ENCODE measurements at regions of chr11 and their contacts with region 1.

Region 1: DNA sequence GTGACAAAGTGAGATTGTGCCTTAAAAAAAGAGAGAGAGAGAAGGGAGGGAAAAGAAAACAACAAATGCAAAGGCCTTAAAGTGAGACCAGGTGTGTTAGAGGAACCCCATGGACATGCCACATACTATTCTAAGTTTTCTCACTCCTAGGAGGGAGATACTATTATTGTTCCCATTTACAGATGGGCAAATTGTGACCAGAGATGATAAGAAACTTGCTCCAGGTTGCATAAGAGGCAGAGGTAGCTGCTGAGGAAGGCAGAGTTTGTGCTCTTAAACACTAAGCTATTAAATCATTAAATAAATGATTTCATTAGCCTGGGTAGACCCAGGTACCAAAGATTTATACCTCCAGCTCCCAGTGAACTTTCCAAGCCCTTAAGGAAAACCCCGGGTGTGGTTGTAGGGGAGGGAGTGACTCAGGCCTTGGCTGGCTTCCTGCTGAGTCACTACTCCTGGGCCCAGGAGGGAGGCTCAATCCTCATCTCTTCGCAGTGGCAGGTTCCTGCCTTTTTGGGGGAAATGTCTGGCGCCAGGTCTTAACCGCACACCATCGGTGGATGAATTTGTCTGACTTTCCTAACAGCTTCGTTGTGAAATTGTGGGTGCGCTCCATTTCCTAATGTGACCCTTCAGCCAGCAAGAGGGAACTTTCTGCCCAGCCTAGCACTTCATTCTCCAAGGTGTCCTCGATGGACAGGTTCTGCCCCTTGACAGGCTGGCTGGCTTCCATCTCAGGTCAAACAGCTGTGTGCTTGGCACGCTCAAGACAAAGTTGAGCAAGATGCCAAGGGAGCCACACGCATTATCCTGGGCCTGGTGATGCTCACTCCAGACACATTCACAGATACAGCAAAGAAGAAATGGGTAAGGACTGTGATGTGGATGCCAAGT is 33.4 kb upstream of the PTPRJ start:
- DNase-seq: peak; percentile 93 to 99
- H3K4me3 ChIP-seq: no peak overlapping the region
- H3K27ac ChIP-seq: peak overlapping the region; percentile 79
- H3K4me1 ChIP-seq: peaks cover 55% of the 10 kb centered on the region
- H3K27me3 ChIP-seq: no peaks in the 10 kb centered on the region
- CTCF ChIP-seq: no peak

Region 2: DNA sequence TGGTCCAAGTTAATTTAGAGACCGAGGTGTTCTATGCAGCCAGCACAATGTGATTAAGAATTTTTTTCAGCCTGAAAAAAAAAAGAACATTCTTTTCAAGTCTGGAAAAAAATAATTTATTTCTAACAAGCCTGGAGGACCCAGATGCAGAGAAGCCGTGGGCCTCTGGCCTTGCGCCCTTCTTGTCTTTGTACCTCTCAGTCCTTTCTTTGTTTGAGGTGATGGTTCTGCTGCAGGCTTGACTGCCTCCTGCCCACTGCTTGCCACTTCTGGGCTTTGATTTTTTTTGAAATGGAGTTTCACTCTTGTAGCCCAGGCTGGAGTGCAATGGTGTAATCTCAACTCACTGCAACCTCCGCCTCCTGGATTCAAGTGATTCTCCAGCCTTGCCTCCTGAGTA is 26.2 kb after region 1 on chr11:
- CTCF ChIA-PET with region 1: no interaction called
- POLR2A ChIA-PET with region 1: interaction called, 3 read pairs
- intact Hi-C with region 1: loop called (anchors 2 kb)
- DNase-seq: no peak
- H3K4me3 ChIP-seq: no peak overlapping the region
- H3K27ac ChIP-seq: peak overlapping the region; percentile 79
- H3K4me1 ChIP-seq: peaks cover 34% of the 10 kb centered on the region
- H3K27me3 ChIP-seq: no peaks in the 10 kb centered on the region
- CTCF ChIP-seq: no peak

Region 3: GRCh38 chr11:48001438-48002021 is 54.6 kb after region 1 on chr11:
- CTCF ChIA-PET with region 1: no interaction called
- POLR2A ChIA-PET with region 1: no interaction called
- intact Hi-C with region 1: no loop called
- DNase-seq: no peak
- H3K4me3 ChIP-seq: no peak overlapping the region
- H3K27ac ChIP-seq: no peak overlapping the region
- H3K4me1 ChIP-seq: peaks cover 27% of the 10 kb centered on the region
- H3K27me3 ChIP-seq: no peaks in the 10 kb centered on the region
- CTCF ChIP-seq: no peak

Region 4: DNA sequence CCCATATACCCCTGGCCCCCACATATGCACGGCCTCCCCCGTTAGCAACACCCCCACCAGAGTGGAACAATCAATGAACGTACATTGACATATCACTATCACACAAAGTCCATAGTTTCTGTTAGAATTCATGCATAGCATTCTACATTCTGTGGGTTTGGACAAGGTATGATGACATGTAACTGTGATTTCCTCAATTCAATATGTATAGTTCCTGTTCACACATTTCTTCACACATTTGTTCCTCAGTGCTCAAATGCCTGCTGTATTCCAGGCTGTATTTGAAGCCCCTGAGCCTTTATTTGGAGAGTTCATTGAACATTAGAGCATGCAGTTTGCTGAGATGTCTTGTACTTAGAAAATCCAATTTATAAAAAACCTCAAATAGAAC is 103.4 kb after region 1 on chr11:
- CTCF ChIA-PET with region 1: interaction called, 7 read pairs
- POLR2A ChIA-PET with region 1: no interaction called
- intact Hi-C with region 1: loop called (anchors 1 kb)
- DNase-seq: peak in 1 of 2 experiments; percentile 37
- H3K4me3 ChIP-seq: peak overlapping the region; percentile 12; the same call in 1 of the 2 replicates
- H3K27ac ChIP-seq: peak overlapping the region; percentile 91
- H3K4me1 ChIP-seq: peaks cover 80% of the 10 kb centered on the region
- H3K27me3 ChIP-seq: no peaks in the 10 kb centered on the region
- CTCF ChIP-seq: no peak

Region 5: GRCh38 chr11:48063424-48063978 is 116.6 kb after region 1 on chr11:
- CTCF ChIA-PET with region 1: no interaction called
- POLR2A ChIA-PET with region 1: interaction called, 3 read pairs
- intact Hi-C with region 1: loop called (anchors 1 kb)
- DNase-seq: peak; percentile 62 to 98
- H3K4me3 ChIP-seq: peak overlapping the region; percentile 27; the same call in 1 of the 2 replicates
- H3K27ac ChIP-seq: peak overlapping the region; percentile 95
- H3K4me1 ChIP-seq: peaks cover 73% of the 10 kb centered on the region
- H3K27me3 ChIP-seq: no peaks in the 10 kb centered on the region
- CTCF ChIP-seq: no peak

Region 6: DNA sequence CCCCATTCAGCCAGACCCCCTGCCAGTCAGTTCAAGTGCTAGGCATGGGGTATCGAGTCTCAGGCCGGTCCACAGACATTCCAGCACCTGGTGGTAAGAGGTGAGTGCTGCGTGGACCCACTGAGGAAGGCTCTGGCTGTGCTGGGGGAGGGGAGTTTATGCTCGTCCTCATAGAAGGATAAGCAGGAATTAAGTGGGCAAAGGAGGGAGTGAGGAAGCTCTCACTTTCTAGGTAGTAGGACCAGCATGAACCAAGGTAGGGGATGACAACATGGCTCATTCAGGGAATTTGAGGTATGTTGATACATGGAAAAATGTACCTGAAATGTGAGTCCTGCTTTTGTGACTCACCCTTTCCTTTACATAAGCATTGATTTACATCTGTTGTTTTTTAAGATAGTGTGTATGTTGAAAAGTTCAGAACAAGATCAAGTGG is 150.1 kb after region 1 on chr11:
- CTCF ChIA-PET with region 1: no interaction called
- POLR2A ChIA-PET with region 1: no interaction called
- intact Hi-C with region 1: no loop called
- DNase-seq: peak; percentile 39 to 92
- H3K4me3 ChIP-seq: no peak overlapping the region
- H3K27ac ChIP-seq: peak overlapping the region; percentile 53
- H3K4me1 ChIP-seq: peaks cover 23% of the 10 kb centered on the region
- H3K27me3 ChIP-seq: no peaks in the 10 kb centered on the region
- CTCF ChIP-seq: no peak

Measured in PC-9 (cell line).